Prostate gland (tissue), 2 donors: ENCODE measurements at regions of chr6 and their contacts with region 1.

Region 1: DNA sequence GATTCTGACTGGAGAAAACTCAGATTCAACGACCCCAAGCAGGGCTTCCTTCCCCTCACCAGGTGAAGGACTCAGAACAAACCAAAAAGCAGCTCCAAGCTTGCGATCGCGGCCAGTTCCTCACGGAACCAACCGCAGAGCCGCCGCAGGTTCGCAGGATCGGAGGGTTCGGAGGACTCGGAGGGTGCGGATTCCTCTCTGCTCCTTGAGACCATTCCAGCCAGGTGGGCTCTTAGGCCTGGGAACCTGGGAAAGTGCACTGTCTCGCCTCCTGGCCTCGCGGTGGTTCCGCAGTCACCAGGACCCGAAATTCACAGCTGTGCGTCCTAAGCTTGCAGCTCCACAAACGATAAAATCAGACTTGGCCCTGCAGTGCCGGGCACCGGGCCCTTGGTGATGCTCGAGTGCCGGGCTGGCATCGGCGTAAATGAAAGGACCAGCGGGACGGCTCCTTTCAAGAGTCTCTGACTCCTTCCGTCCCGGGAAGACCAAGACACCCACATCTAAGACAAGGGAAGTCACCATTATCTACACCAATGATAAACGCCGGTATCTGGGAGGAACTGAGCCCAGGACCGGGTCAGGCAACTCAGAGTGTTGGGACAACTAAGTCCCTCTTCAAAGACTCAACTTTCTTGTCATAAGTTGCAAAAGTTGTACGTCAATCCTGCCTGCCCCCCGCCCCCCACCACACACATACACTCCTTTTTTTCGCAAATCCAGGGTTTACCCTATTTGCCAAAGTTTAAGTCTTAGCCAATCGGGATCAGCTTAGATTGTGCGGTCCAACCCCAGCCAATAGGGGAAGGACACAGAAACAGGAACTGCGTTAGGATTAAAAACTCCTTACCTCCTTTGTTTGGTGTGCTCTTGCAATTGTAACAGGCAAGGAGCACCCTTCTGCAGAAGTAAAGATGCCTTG is 69.8 kb upstream of the PRSS16 start:
- DNase-seq: peak; percentile 71
- H3K4me3 ChIP-seq: peak overlapping the region; percentile 82 to 85
- H3K27ac ChIP-seq: peak overlapping the region; percentile 79 to 85
- H3K4me1 ChIP-seq: no peaks in the 10 kb centered on the region
- H3K27me3 ChIP-seq: no peaks in the 10 kb centered on the region
- CTCF ChIP-seq: peak in 2 of 4 experiments; percentile 42 to 50
- POLR2A ChIP-seq: peak; percentile 16

Region 2: DNA sequence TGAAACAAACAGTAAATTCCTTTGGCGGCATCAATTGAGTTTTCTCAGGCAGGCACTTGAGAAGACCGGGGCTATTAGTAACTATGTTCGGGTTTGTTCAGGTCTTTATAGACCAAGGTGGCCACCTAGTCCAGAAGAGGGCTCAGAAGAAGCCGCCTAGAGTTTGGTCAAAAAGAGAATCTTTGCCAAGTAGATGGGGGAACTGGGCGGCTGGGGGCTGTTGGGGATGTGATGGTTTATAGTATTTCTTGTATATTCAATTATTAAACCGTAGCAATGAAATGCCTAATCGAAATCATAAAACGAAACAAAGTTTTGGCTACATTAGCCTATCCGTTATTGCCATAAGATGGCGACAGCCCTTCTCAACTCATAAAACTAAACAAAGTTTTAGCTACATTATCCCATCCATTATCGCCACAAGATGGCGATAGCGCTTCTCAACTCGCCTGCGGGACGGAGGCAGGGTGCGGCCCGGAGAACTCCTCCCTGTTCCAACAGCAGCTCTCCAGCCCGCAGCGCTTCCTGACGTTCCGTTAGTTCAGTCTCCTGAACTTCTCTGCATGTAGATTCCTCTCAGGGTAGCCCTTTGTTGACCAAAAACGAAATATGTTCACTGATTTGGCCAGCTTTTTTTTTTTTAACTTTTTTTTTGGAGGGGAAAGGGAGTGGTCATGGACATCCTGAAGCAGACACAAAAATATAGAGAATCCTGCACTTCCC is 50.8 kb before region 1 on chr6:
- intact Hi-C with region 1: loop called (anchors 5 kb)
- DNase-seq: peak; percentile 86
- H3K4me3 ChIP-seq: peak overlapping the region in 1 of 2 donors; percentile 4
- H3K27ac ChIP-seq: peak overlapping the region; percentile 5 to 45
- H3K4me1 ChIP-seq: no peaks in the 10 kb centered on the region
- H3K27me3 ChIP-seq: no peaks in the 10 kb centered on the region
- CTCF ChIP-seq: peak; percentile 72 to 85 (median 76)
- POLR2A ChIP-seq: no peak

Region 3: GRCh38 chr6:27479319-27480182 is 301.8 kb after region 1 on chr6:
- intact Hi-C with region 1: loop called (anchors 5 kb)
- DNase-seq: peak; percentile 76
- H3K4me3 ChIP-seq: peak overlapping the region; percentile 41 to 61
- H3K27ac ChIP-seq: peak overlapping the region; percentile 96
- H3K4me1 ChIP-seq: no peaks in the 10 kb centered on the region
- H3K27me3 ChIP-seq: no peaks in the 10 kb centered on the region
- CTCF ChIP-seq: peak in 2 of 4 experiments; percentile 6 to 8
- POLR2A ChIP-seq: peak; percentile 43

Region 4: GRCh38 chr6:27518881-27519795 is 341.4 kb after region 1 on chr6:
- intact Hi-C with region 1: loop called (anchors 5 kb)
- DNase-seq: peak; percentile 56
- H3K4me3 ChIP-seq: peak overlapping the region; percentile 55 to 78
- H3K27ac ChIP-seq: peak overlapping the region; percentile 85 to 95
- H3K4me1 ChIP-seq: no peaks in the 10 kb centered on the region
- H3K27me3 ChIP-seq: no peaks in the 10 kb centered on the region
- CTCF ChIP-seq: peak; percentile 39 to 69 (median 55)
- POLR2A ChIP-seq: no peak

Region 5: DNA sequence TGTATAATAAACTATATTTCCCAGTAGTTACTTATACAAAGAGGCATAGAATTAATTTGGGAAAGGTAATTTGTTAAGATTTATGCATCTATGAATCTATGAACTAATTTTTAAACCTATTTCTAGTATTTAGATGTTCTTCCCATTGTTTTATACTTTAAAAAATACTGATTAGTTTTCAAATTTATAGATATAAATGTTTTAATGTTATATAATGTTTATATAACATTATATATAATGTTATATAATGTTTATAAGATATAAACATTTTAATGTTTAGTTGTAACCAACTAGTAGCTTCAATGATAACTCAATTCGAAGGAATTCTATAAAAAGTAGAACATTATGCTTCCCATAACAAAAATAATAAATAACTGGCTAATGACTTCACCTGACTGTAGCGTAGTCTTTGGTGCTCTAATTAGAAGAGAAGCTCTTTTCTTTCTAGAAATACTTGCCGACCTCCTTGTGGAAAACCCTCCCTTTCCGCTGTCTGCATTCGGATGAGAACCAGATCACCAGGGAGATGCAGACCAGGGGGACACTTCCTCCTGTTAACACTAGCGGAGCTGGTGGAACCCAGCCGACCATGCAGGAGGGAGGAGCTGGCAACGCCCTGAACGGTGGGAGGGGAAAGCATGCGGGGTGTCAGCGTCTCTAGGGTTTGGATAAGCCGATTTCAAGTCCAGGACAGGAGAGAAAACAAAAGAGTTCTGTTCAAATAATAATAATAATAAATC is 576.1 kb after region 1 on chr6:
- intact Hi-C with region 1: loop called (anchors 5 kb)
- DNase-seq: peak; percentile 26
- H3K4me3 ChIP-seq: peak overlapping the region; percentile 18 to 19
- H3K27ac ChIP-seq: no peak overlapping the region
- H3K4me1 ChIP-seq: no peaks in the 10 kb centered on the region
- H3K27me3 ChIP-seq: no peaks in the 10 kb centered on the region
- CTCF ChIP-seq: no peak
- POLR2A ChIP-seq: no peak

Region 6: DNA sequence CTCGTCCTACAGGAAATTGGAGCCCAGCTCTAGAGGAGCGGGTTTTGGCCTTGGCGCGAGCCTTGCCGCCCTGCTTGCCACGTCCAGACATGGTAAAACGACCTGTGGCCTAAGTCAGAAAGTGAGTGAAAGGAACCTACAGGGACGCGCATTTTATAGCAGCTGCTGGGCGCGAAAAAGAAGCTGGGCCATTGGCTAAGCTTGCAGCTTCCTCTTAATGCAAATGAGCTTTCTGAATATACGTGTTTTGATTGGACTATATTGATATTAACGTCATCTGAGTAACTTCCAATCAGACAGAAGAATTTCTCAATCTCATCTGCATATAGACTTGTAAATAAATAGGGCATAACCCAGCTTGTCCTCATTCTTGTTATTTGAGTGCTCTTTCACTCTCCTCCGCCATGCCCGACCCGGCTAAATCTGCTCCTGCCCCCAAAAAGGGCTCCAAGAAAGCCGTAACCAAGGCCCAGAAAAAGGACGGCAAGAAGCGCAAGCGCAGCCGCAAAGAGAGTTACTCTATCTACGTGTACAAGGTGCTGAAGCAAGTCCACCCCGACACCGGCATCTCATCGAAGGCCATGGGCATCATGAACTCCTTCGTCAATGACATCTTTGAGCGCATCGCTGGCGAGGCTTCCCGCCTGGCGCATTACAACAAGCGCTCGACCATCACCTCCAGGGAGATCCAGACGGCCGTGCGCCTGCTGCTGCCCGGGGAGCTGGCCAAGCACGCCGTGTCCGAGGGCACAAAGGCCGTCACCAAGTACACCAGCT is 715.5 kb after region 1 on chr6:
- intact Hi-C with region 1: loop called (anchors 5 kb)
- DNase-seq: peak; percentile 89
- H3K4me3 ChIP-seq: peak overlapping the region; percentile 46 to 47
- H3K27ac ChIP-seq: peak overlapping the region; percentile 72 to 80
- H3K4me1 ChIP-seq: no peaks in the 10 kb centered on the region
- H3K27me3 ChIP-seq: no peaks in the 10 kb centered on the region
- CTCF ChIP-seq: peak in 1 of 4 experiments; percentile 7
- POLR2A ChIP-seq: peak; percentile 90